Activated B cell treated with CpG ODN at 0.5 μM for 24 hours (primary cell): ENCODE measurements at regions of chr5 and their contacts with region 1.

Region 1: GRCh38 chr5:124410539-124411488 is 335.6 kb downstream of the ZNF608 start:
- DNase-seq: no peak
- ATAC-seq: peak; percentile 96
- H3K4me3 Mint-ChIP-seq: peak overlapping the region; percentile 51
- H3K27ac Mint-ChIP-seq: no peak overlapping the region
- H3K4me1 Mint-ChIP-seq: peaks cover 24% of the 10 kb centered on the region
- H3K27me3 Mint-ChIP-seq: peaks cover 3% of the 10 kb centered on the region
- CTCF ChIP-seq: no peak

Region 2: DNA sequence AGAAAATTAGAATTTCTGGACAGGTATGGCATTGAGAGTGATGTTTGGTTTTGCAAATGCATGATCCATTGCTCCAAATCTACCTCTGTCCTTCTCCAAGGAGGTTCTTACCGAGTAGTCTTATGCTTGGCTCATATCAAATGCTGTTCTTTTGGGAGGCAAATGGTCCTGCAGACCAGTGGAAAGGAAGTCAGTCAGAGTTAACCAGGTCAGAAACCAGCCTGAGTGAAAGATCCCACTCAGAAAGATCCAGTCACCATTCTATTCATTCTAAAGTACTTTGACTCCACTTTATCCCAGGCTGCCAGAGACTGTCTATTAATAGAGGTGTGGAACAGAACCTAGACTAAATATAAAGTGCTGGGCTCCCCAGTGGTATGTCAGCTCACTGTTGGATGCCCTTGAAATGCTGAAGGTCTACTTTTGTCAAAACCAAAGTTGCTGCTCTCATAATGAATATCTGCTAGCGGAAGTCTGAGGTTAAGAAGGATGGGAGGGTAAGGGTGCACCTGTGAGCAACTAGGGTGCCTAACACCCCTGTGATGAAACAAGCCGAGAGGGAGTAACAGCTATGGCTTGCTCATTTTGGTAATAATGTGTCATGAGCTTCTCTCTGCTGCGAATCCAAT is 33.4 kb after region 1 on chr5:
- CTCF ChIA-PET with region 1: no interaction called
- POLR2A ChIA-PET with region 1: interaction called, 4 read pairs
- intact Hi-C with region 1: loop called (anchors 2 kb)
- DNase-seq: no peak
- ATAC-seq: peak; percentile 95
- H3K4me3 Mint-ChIP-seq: no peak overlapping the region
- H3K27ac Mint-ChIP-seq: peak overlapping the region; percentile 16
- H3K4me1 Mint-ChIP-seq: peaks cover 14% of the 10 kb centered on the region
- H3K27me3 Mint-ChIP-seq: no peaks in the 10 kb centered on the region
- CTCF ChIP-seq: no peak

Region 3: DNA sequence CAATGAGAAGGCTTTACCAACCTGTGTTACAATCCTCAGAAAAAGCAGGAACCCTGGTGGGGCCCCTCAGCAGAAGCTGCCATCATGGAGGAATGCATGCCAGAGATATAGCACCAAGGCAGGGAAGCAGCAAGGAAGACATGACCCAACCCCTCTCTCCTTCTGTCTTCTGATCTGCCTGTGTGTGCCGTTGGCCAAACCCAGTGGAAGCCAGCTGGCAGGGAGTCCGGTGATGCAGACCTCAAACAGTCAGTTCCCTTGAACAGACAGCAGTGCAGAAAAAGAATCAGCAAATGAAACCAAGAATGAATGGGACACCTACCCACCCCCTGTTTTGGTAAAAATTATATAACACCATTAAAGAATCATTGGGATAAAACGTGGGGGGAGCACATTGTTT is 101.4 kb after region 1 on chr5:
- CTCF ChIA-PET with region 1: no interaction called
- POLR2A ChIA-PET with region 1: no interaction called
- intact Hi-C with region 1: no loop called
- DNase-seq: no peak
- ATAC-seq: no peak
- H3K4me3 Mint-ChIP-seq: no peak overlapping the region
- H3K27ac Mint-ChIP-seq: no peak overlapping the region
- H3K4me1 Mint-ChIP-seq: no peaks in the 10 kb centered on the region
- H3K27me3 Mint-ChIP-seq: peaks cover 3% of the 10 kb centered on the region
- CTCF ChIP-seq: no peak